ENCODE measurements at regions of chr13 and their contacts with region 1.

Region 1: GRCh38 chr13:112740502-112741131 is 50.8 kb downstream of the ATP11A start:
- DNase-seq: peak; percentile 88

Region 2: GRCh38 chr13:112711528-112712265 is 28.9 kb before region 1 on chr13:
- intact Hi-C with region 1: loop called (anchors 2 kb)
- DNase-seq: peak; percentile 86

Region 3: GRCh38 chr13:112783135-112783977 is 42.7 kb after region 1 on chr13:
- intact Hi-C with region 1: loop called (anchors 5 kb)
- DNase-seq: no peak